ENCODE measurements at regions of chr14 and their contacts with region 1.

Region 1: DNA sequence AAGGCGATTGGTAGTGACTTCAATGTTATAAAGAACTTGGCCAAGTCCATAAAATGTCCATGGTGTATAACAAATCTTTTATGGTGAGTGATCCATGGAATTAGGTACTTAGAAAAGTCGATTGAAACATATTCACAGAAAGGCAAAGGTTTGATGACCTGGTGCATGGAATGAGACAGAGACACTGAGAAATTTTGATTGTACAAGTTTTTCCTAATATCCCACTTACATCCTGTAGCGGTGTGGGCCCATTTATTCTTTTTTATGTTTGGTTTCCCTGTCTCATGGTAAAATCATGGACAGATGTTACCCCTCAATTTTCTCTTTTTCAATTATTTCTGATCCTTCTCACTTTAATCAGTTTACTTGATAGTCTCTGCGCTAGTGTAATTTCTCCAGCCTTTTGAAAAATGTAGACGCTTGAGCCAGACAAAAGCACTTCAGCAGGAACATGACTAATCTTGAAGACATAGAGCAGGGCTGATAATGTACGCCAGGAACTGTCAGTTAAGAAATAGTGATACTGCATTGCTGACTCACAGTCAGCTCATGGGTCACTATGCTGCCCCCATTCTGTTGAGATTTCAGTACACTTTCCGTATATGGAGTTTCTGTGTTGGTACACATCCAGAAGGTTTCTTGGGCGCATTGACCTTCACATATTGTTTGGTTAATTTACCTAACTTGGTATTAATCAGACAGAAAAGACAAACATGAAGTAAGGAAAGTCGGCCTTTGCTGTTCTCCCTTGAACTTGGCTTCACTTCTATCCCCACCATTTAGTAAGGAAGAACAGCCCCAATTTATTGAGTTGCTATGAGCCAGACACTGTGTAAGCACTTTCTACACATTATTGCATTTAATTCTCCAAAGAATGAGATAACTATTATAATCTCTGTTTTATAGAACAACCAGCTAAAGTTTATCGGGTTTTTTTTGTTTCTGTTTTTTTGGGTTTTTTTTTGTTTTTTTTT is 841.7 kb downstream of the DIO2 start:
- DNase-seq: peak; percentile 79
- H3K4me3 ChIP-seq: no peak overlapping the region
- H3K27ac ChIP-seq: peak overlapping the region; percentile 61 to 87 (median 78)
- H3K4me1 ChIP-seq: peaks cover 0 to 50% (median 26%) of the 10 kb centered on the region in 4 donors
- H3K27me3 ChIP-seq: no peaks in the 10 kb centered on the region
- CTCF ChIP-seq: no peak
- EP300 ChIP-seq: peak; percentile 50 to 90 (median 89)
- POLR2A ChIP-seq: no peak

Region 2: DNA sequence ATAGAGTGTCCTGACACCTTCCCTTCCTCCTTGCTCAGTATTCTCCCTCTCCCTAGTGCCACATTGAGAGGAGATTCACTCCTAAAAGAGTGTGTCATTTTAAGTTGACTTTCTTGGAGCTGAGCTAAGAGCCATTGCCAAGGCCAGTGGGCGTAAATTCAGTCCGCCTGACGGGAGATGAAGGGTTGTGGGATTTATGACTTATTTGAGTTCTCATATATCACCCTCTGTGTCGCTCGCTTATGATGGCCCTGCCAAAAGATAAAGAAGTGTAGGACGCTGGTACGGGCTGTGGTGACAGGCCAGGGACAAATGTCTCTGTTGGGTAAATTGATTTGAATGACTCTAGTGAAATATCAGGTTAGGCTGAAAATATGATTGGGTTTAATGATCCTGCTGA is 332.1 kb before region 1 on chr14:
- intact Hi-C with region 1: no loop called
- DNase-seq: no peak
- H3K4me3 ChIP-seq: no peak overlapping the region
- H3K27ac ChIP-seq: no peak overlapping the region
- H3K4me1 ChIP-seq: no peaks in the 10 kb centered on the region
- H3K27me3 ChIP-seq: no peaks in the 10 kb centered on the region
- CTCF ChIP-seq: no peak
- EP300 ChIP-seq: no peak
- POLR2A ChIP-seq: no peak

Region 3: GRCh38 chr14:79056879-79057278 is 312.8 kb before region 1 on chr14:
- intact Hi-C with region 1: loop called (anchors 10 kb)
- DNase-seq: no peak
- H3K4me3 ChIP-seq: no peak overlapping the region
- H3K27ac ChIP-seq: peak overlapping the region in 3 of 4 donors; percentile 56 to 73 (median 57)
- H3K4me1 ChIP-seq: peaks cover 0 to 24% (median 22%) of the 10 kb centered on the region in 4 donors
- H3K27me3 ChIP-seq: no peaks in the 10 kb centered on the region
- CTCF ChIP-seq: no peak
- EP300 ChIP-seq: no peak
- POLR2A ChIP-seq: no peak

Region 4: DNA sequence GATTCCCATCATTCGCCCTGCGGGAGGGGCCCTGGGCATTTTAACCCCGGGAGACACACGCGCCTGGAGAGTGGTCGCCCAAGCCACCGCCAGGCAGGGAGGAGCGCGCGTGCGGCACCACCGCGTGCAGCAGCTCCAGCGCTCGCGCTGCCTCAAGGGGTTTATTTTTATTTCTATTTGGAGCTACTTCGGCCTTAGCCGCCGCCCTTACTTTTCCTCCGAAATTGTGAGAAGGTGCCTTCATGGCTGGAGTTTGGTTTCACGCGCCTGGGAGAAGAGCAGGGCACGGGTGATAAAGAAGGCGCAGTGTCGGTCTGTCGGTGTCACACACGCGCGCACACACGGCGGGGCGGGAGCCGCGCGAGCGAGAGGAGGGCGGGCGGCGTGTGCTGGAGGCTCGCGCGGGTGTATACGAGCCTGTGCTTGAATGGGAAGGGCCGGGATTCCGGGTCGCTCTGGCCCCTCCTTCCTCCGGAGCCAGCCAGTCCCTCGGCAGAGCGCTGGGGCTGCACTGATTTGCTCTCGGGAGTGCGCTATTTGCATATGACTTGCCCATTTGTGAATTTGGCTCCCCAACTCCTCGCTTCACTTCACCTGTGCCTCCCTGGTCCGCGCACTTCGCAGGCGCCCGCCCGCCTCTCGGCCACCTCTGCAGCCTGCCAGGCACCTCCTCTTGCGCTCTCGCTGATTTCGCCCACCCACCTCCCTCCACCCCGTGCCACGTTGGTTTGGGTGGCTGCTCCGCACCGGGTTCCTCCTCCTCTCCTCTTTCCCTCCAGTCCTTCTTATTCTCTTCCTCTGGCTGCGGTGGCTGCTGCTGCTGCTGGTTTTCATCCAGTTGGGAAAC is 90.6 kb before region 1 on chr14:
- intact Hi-C with region 1: loop called (anchors 2 kb)
- DNase-seq: peak; percentile 93
- H3K4me3 ChIP-seq: peak overlapping the region; percentile 63 to 66 (median 65)
- H3K27ac ChIP-seq: peak overlapping the region; percentile 67 to 81 (median 76)
- H3K4me1 ChIP-seq: peaks cover 0 to 39% (median 23%) of the 10 kb centered on the region in 4 donors
- H3K27me3 ChIP-seq: no peaks in the 10 kb centered on the region
- CTCF ChIP-seq: no peak
- EP300 ChIP-seq: no peak
- POLR2A ChIP-seq: peak; percentile 75 to 83

Region 5: GRCh38 chr14:79299161-79299560 is 70.5 kb before region 1 on chr14:
- intact Hi-C with region 1: loop called (anchors 5 kb)
- DNase-seq: no peak
- H3K4me3 ChIP-seq: no peak overlapping the region
- H3K27ac ChIP-seq: no peak overlapping the region
- H3K4me1 ChIP-seq: peaks cover 0 to 27% (median 23%) of the 10 kb centered on the region in 4 donors
- H3K27me3 ChIP-seq: no peaks in the 10 kb centered on the region
- CTCF ChIP-seq: no peak
- EP300 ChIP-seq: no peak
- POLR2A ChIP-seq: no peak

Measured in sigmoid colon (tissue), 7 donors.